ENCODE measurements at regions of chr3 and their contacts with region 1.

Region 1: DNA sequence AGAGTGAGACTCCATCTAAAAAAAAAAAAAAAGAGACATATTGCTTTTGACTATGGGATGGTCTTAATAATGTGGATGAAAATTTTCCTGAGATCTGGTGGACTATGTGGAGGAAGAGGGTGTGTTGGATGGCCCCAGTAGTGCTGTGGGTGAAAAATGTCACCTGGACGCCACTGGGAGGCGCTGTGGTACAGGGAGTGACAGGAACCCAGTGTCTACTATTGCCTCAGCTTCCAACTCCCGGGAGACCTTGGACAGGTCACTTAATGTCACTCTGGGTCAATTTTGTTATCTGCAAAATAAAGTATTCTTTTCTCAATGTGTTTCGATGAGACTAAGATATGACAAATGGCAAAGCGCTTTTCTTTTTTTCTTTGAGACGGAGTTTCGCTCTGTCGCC is 27.7 kb upstream of the DCP1A start:
- DNase-seq: peak; percentile 84
- H3K4me3 Mint-ChIP-seq: no peak overlapping the region
- H3K27ac Mint-ChIP-seq: no peak overlapping the region
- H3K4me1 Mint-ChIP-seq: no peaks in the 10 kb centered on the region
- H3K27me3 Mint-ChIP-seq: peaks cover 14% of the 10 kb centered on the region

Region 2: DNA sequence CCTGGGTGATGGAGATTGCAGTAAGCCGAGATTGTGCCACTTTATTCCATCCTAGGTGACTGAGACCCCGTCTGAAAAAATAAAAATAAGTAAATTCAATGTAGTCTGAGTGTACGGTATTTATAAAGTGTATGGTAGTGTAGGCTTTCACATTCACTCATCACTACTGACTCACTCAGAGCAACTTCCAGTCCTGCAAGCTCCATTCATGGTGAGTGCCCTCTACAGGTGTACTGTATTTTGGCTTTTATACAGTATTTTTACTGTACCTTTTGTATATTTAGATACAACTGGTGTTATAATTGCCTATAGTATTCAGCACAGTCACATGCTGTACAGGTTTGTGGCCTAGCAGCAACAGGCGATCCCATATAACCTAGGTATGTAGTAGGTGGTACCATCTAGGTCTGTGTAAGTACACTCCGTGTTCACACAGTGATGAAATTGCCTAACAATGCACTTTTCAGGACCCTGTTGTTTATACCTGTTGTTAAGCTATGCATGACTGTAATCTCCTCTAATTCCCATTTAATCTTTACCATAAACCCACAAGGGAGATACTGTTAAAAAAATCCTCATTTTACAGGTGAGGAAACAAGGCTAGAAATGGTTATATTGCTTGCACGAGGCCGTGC is 138.7 kb after region 1 on chr3:
- intact Hi-C with region 1: loop called (anchors 10 kb)
- DNase-seq: no peak
- H3K4me3 Mint-ChIP-seq: no peak overlapping the region
- H3K27ac Mint-ChIP-seq: no peak overlapping the region
- H3K4me1 Mint-ChIP-seq: no peaks in the 10 kb centered on the region
- H3K27me3 Mint-ChIP-seq: peaks cover 29% of the 10 kb centered on the region